PC-9 (cell line): ENCODE measurements at regions of chr2 and their contacts with region 1.

Region 1: GRCh38 chr2:188524519-188525113 is 232.9 kb downstream of the GULP1 start:
- DNase-seq: peak in 1 of 2 experiments; percentile 18
- H3K4me3 ChIP-seq: no peak overlapping the region
- H3K27ac ChIP-seq: no peak overlapping the region
- H3K4me1 ChIP-seq: no peaks in the 10 kb centered on the region
- H3K27me3 ChIP-seq: no peaks in the 10 kb centered on the region
- CTCF ChIP-seq: peak; percentile 74

Region 2: GRCh38 chr2:188425266-188425665 is 99.3 kb before region 1 on chr2:
- CTCF ChIA-PET with region 1: no interaction called
- POLR2A ChIA-PET with region 1: no interaction called
- intact Hi-C with region 1: no loop called
- DNase-seq: no peak
- H3K4me3 ChIP-seq: no peak overlapping the region
- H3K27ac ChIP-seq: no peak overlapping the region
- H3K4me1 ChIP-seq: no peaks in the 10 kb centered on the region
- H3K27me3 ChIP-seq: no peaks in the 10 kb centered on the region
- CTCF ChIP-seq: no peak

Region 3: DNA sequence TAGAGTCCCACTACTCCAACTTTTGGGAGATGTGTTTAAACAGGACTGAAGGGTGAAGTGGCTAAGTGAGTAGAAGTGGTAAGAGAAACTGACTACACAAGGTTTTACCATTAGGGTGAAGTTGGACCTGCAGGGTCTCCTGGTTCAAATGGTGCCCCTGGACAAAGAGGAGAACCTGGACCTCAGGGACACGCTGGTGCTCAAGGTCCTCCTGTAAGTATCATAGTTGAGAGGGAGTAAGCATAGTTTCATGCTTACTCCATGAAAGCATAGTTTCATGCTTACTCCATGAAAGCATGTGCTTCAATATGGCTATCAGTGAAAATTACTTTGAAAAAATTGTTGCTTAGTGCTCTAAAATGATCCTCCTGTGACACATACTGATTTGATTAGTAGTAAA is 468.6 kb after region 1 on chr2:
- CTCF ChIA-PET with region 1: no interaction called
- POLR2A ChIA-PET with region 1: no interaction called
- intact Hi-C with region 1: loop called (anchors 5 kb)
- DNase-seq: no peak
- H3K4me3 ChIP-seq: no peak overlapping the region
- H3K27ac ChIP-seq: no peak overlapping the region
- H3K4me1 ChIP-seq: no peaks in the 10 kb centered on the region
- H3K27me3 ChIP-seq: no peaks in the 10 kb centered on the region
- CTCF ChIP-seq: no peak

Region 4: DNA sequence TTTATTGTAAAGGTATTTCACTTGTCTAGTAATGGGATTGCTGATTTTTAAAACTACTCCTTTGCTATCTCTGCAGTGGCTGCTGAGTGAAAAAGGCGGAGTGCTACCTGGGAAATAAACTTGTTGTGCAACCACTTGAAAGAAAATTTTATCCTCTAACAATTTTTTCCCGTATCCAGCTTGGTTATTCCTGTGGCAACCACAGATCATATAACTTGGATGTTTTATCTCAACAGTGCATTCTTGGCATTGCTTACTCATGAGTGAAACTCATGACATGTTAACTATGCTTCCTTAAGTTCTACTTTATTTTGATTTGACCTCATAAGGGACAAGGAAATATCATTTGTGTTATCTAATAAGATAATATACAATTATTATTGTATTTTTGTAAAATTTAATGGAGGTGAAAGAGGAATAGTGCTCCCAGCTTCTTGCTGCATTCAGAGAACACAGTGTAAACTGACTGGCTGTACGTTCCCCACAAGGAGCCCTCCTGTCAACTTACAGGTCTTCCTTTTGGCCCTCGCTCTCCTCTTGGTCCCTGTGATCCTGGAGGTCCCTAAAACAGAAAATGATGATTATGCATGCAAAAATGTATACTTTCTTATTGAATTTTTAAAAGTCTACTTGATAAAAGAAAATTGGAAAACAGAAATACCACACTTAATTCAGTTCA is 572.3 kb after region 1 on chr2:
- CTCF ChIA-PET with region 1: no interaction called
- POLR2A ChIA-PET with region 1: no interaction called
- intact Hi-C with region 1: loop called (anchors 5 kb)
- DNase-seq: peak; percentile 8 to 62
- H3K4me3 ChIP-seq: no peak overlapping the region
- H3K27ac ChIP-seq: no peak overlapping the region
- H3K4me1 ChIP-seq: no peaks in the 10 kb centered on the region
- H3K27me3 ChIP-seq: no peaks in the 10 kb centered on the region
- CTCF ChIP-seq: no peak

Region 5: GRCh38 chr2:189287982-189288521 is 763.4 kb after region 1 on chr2:
- CTCF ChIA-PET with region 1: no interaction called
- POLR2A ChIA-PET with region 1: no interaction called
- intact Hi-C with region 1: loop called (anchors 5 kb)
- DNase-seq: no peak
- H3K4me3 ChIP-seq: no peak overlapping the region
- H3K27ac ChIP-seq: no peak overlapping the region
- H3K4me1 ChIP-seq: no peaks in the 10 kb centered on the region
- H3K27me3 ChIP-seq: no peaks in the 10 kb centered on the region
- CTCF ChIP-seq: peak; percentile 58; the same call in 1 of the 2 replicates

Region 6: GRCh38 chr2:189347540-189347939 is 822.9 kb after region 1 on chr2:
- CTCF ChIA-PET with region 1: no interaction called
- POLR2A ChIA-PET with region 1: no interaction called
- intact Hi-C with region 1: loop called (anchors 10 kb)
- DNase-seq: peak; percentile 18 to 41
- H3K4me3 ChIP-seq: no peak overlapping the region
- H3K27ac ChIP-seq: no peak overlapping the region
- H3K4me1 ChIP-seq: no peaks in the 10 kb centered on the region
- H3K27me3 ChIP-seq: no peaks in the 10 kb centered on the region
- CTCF ChIP-seq: no peak

Region 7: DNA sequence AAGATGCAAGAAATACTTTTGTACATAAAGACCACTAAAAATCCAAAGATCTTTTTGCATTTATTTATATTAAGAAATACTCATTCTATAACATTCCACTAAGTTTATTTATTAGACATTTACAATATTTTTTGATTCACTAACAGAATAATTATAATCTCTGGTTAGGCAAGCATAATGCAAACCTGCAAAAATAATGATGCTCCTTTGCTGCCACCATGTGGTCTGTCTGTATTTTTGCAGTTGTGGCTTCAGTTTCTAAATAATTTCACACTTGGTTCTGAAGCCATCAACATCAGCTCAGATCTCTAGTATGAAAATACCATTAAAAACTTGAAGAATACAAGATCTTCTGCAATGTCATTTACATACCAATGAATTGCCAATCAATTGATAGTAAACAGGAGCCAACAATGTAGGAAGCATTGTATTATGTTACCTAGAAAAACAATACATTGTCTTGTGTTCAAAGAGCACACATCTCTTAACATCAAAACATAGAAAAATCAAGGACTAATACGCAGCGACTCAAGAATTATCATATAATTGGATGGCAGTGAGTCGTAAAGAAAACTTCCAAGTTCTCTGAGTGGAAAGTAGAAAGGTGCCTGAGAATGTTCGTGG is 887.8 kb after region 1 on chr2:
- CTCF ChIA-PET with region 1: no interaction called
- POLR2A ChIA-PET with region 1: no interaction called
- intact Hi-C with region 1: loop called (anchors 2 kb)
- DNase-seq: peak in 1 of 2 experiments; percentile 3
- H3K4me3 ChIP-seq: no peak overlapping the region
- H3K27ac ChIP-seq: no peak overlapping the region
- H3K4me1 ChIP-seq: 0 out of 2 replicates have a peak, but pooled peaks cover 4% of the 10 kb centered on the region
- H3K27me3 ChIP-seq: no peaks in the 10 kb centered on the region
- CTCF ChIP-seq: peak; percentile 74